ENCODE measurements at regions of chr1 and their contacts with region 1.

Region 1: DNA sequence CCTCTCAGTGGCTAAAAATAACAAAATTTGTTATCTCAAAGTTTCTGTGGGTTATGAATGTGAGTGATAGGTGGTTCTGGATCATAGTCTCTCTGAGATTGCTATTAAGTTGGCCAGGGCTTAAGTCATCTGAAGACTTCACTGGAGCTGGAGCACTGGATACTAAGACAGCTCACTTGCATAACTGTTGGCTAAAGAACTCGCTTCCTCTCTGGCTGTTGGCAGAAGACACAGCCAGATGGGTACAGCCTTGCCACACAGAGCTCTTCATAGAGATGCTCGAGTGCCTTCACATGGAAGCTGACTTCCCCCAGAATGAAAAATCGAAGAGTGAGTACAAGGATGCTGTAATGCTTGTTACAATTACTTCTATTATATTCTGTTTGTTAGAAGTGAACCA is 333.8 kb downstream of the ZP4 start:
- DNase-seq: no peak
- ATAC-seq: no peak
- H3K4me3 ChIP-seq: no peak overlapping the region
- H3K27ac ChIP-seq: no peak overlapping the region
- H3K4me1 ChIP-seq: no peaks in the 10 kb centered on the region
- H3K27me3 ChIP-seq: no peaks in the 10 kb centered on the region
- CTCF ChIP-seq: no peak

Region 2: GRCh38 chr1:236619398-236619797 is 937.5 kb before region 1 on chr1:
- intact Hi-C with region 1: loop called in 1 of 3 experiments (anchors 10 kb)
- DNase-seq: no peak
- ATAC-seq: no peak
- H3K4me3 ChIP-seq: no peak overlapping the region
- H3K27ac ChIP-seq: no peak overlapping the region
- H3K4me1 ChIP-seq: no peaks in the 10 kb centered on the region
- H3K27me3 ChIP-seq: no peaks in the 10 kb centered on the region
- CTCF ChIP-seq: no peak